ENCODE measurements at regions of chr6 and their contacts with region 1.

Region 1: GRCh38 chr6:33248925-33249731 is 22.5 kb downstream of the VPS52 start:
- DNase-seq: peak; percentile 93 to 99 (median 97)

Region 2: DNA sequence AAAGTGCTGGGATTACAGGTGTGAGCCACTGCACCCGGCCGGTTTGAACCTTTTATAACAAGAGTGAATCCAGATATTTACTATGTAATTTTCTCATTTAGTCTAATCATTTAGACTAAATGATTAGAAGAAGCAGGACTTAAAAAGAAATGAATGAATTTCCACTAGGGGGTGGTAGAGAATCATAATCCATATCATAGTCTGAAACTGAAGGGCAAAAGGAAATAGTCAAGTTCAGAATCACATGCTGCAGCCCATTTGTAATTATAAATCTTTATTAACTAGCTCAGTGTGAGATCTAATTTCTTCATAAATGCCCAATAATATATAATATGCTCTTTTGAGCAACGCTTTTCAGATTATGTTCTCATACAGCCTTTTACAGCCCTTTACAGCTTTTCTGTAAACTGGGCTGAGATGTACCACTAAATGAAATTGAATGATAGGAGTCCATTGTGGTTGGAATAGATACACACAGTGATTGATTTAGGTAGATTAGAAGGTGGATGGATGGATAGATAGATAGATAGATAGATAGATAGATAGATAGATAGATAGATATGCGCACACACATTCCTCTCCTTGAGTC is 363.3 kb before region 1 on chr6:
- intact Hi-C with region 1: loop called (anchors 5 kb)
- DNase-seq: no peak

Region 3: GRCh38 chr6:33014841-33015634 is 234.1 kb before region 1 on chr6:
- intact Hi-C with region 1: loop called (anchors 2 kb)
- DNase-seq: peak in 2 of 10 donors; percentile 21 to 26

Region 4: GRCh38 chr6:33118525-33119123 is 130.5 kb before region 1 on chr6:
- intact Hi-C with region 1: loop called (anchors 1 kb)
- DNase-seq: no peak

Region 5: DNA sequence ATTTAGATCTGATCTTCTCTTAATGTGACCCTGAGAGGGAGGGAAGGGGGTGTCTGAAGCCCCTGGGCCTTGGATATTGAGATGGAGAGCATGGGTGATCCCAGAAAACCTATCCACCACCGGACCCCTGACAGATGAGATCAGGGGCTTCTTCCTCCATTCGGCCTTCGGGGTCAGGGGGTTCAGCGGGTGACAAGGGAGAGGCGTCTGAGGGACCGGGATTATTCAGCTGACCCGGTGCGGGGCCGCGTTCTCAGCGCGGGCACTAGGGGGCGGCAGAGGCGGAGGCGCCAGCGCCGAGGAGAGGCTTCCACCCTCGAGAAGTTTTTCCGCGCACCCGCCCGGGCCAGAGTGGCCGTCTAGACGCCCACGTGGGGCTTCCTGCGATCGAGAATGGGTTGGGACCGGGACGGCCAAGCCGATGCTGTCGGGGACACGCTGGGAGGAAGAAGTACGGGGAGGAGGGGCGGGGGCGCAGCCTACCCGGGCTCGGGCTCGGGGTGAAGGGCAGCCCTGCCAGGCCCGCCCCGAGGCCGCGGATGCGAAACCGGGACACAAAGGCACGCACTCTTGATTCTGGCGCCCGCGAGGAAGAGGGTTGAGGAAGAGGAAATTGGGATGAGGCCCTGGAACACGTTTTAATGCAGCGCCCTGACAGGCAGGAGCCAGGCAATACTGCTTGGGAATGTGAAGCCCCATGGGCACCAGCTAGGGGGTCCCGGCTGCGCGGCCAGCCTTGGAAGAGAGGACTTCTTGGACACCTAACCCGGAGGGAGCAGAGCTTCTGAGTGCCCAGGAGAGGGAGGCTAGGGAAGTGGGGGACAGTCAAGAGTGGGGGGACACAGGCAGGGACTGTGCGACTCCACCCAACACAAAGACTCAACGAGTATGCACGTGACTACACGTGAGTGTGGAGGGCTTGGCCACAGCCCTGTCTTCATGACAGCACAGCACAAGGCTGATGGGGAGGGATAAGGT is 87.5 kb before region 1 on chr6:
- intact Hi-C with region 1: loop called (anchors 1 kb)
- DNase-seq: peak; percentile 57 to 96 (median 80)

Region 6: GRCh38 chr6:33200219-33201146 is 48.6 kb before region 1 on chr6 and contains the starts of genes RXRB and SLC39A7:
- intact Hi-C with region 1: loop called (anchors 10 kb)
- DNase-seq: peak; percentile 97 to 99 (median 98)

Region 7: GRCh38 chr6:33213166-33213988 is 35.8 kb before region 1 on chr6:
- intact Hi-C with region 1: loop called (anchors 5 kb)
- DNase-seq: peak in 5 of 10 donors; percentile 41 to 91 (median 85)

Measured in posterior cingulate gyrus (tissue), 11 donors.